Left cardiac atrium (tissue), 4 donors: ENCODE measurements at regions of chr15 and their contacts with region 1.

Region 1: DNA sequence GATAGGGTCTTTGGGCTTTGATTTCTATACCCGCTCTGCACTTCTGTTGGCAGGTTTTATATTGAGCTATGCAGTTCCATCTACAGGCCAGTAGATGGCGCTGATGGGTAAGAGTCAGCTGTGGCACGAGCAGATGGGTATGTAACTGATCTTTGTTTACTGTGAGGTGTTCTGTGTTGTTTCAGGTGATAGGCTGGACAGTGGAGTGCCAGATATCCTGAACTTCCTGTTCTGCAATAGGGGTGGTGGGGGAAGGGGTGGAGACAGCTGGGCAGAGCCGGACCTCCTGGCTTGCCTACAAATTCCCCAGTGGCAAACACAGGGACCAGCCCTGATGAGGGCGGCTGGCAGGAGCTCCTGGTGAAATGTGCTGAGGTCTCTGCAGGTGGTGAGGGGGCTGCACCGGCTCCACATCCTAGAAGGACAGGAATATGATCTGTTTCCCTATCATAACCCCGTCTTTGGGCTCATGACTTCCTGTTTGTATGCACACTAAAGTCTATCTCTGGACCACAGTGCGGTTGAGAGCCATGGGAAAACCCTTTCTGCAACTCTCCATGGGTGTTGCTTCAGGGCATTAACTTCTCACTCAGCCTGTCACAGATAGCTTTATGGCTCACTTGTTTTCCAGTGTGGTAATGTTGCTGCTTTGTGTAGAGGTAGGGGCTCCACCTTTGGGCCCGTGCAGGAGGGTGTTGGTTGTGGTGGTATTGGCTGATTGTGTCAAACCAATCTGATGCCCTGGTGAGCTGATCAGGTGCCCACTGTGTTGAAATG is 13.4 kb upstream of the FAM98B start:
- DNase-seq: peak; percentile 31
- ATAC-seq: peak; percentile 76 to 84

Region 2: GRCh38 chr15:38242055-38242454 is 198.5 kb before region 1 on chr15:
- intact Hi-C with region 1: no loop called
- DNase-seq: no peak
- ATAC-seq: no peak

Region 3: DNA sequence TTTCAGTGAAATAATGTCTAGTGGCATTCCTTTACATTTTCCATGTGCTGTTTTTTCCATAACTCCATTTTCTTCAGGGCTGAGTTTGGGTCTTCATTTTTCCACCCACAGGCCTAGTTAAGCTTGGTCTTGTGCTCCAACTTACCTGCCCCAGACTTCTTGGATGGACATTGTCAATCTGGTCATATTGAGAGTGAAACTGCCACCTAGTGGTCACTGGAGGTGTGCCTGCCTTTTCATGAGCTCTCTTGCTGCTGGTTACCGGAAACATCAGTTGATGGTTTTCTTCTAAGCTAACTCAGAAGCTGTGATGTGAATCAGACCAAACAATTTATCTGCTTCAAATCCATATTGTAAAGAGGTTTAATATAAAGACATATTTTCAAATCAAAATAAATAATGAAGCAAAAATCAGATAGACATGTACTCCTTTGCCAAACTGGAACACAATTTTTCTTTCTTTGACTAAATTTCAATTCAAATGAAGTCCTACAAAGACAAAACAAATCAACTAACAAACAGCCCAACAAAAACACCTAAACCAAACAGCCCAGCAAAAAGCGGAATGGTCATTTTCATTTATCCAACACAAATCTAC is 259.2 kb after region 1 on chr15:
- intact Hi-C with region 1: loop called in 1 of 2 experiments (anchors 10 kb)
- DNase-seq: peak; percentile 53
- ATAC-seq: peak; percentile 25 to 52